HCT116 (cell line): ENCODE measurements at regions of chr14 and their contacts with region 1.

Region 1: GRCh38 chr14:105931808-105932483 is 405.6 kb downstream of the TMEM121 start:
- DNase-seq: no peak
- ATAC-seq: peak; percentile 71
- H3K4me3 ChIP-seq: no peak overlapping the region
- H3K27ac ChIP-seq: no peak overlapping the region
- H3K4me1 ChIP-seq: no peaks in the 10 kb centered on the region
- H3K27me3 ChIP-seq: 0 out of 2 replicates have a peak, but pooled peaks cover 16% of the 10 kb centered on the region
- CTCF ChIP-seq: peak; percentile 18 to 41 (median 24); a peak in 2 of 6 replicates
- POLR2A ChIP-seq: no peak
- RAD21 ChIP-seq: peak; percentile 59

Region 2: GRCh38 chr14:105168979-105169507 is 762.9 kb before region 1 on chr14:
- CTCF ChIA-PET with region 1: no interaction called
- POLR2A ChIA-PET with region 1: no interaction called
- RAD21 ChIA-PET with region 1: no interaction called
- intact Hi-C with region 1: no loop called
- DNase-seq: no peak
- ATAC-seq: peak; percentile 52
- H3K4me3 ChIP-seq: peak overlapping the region; percentile 19 to 48
- H3K27ac ChIP-seq: peak overlapping the region; percentile 50; the same call in 1 of the 2 replicates
- H3K4me1 ChIP-seq: peaks cover 45 to 62% of the 10 kb centered on the region in 2 experiments
- H3K27me3 ChIP-seq: no peaks in the 10 kb centered on the region
- CTCF ChIP-seq: peak in 2 of 3 experiments; percentile 58 to 60; a peak in 4 of 6 replicates
- POLR2A ChIP-seq: no peak
- RAD21 ChIP-seq: no peak

Region 3: DNA sequence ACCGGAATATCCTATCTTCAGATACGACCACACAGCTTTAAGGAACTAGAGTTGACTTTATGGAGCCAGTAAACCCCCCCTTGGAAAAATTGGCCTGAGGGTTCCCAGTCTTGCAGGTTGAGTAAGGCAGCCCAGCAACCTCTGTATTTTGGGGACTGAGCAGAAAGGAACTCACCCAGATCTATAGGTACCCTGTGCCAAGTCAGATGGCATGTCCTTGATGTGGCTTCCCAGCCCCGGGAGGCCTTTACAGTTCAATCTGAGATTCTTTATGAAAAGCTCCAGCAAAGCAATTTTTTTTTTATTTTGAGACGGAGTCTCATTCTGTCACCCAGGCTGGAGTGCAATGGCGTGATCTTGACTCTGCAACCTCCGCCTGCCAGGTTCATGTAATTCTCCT is 377.9 kb before region 1 on chr14:
- CTCF ChIA-PET with region 1: no interaction called
- POLR2A ChIA-PET with region 1: no interaction called
- RAD21 ChIA-PET with region 1: no interaction called
- intact Hi-C with region 1: loop called (anchors 10 kb)
- DNase-seq: no peak
- ATAC-seq: no peak
- H3K4me3 ChIP-seq: no peak overlapping the region
- H3K27ac ChIP-seq: no peak overlapping the region
- H3K4me1 ChIP-seq: no peaks in the 10 kb centered on the region
- H3K27me3 ChIP-seq: no peaks in the 10 kb centered on the region
- CTCF ChIP-seq: no peak
- POLR2A ChIP-seq: no peak
- RAD21 ChIP-seq: no peak

Region 4: DNA sequence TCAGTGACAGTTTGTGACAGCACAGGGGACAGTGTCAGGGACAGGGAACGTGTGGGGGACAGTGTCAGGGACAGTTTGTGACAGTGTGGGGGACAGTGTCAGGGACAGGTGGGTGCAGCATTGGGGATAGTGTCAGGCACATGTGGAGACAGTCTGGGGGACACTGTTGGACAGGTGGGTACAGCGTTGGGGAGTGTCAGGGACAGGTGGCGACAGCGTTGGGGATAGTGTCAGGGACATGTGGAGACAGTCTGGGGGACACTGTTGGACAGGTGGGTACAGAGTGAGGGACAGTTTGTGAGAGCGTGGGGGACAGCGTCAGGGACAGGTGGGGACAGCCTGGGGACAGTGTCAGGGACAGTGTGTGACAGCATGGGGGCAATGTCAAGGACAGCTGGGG is 265.5 kb before region 1 on chr14:
- CTCF ChIA-PET with region 1: no interaction called
- POLR2A ChIA-PET with region 1: no interaction called
- RAD21 ChIA-PET with region 1: no interaction called
- intact Hi-C with region 1: loop called (anchors 5 kb)
- DNase-seq: no peak
- ATAC-seq: no peak
- H3K4me3 ChIP-seq: no peak overlapping the region
- H3K27ac ChIP-seq: no peak overlapping the region
- H3K4me1 ChIP-seq: no peaks in the 10 kb centered on the region
- H3K27me3 ChIP-seq: no peaks in the 10 kb centered on the region
- CTCF ChIP-seq: no peak
- POLR2A ChIP-seq: no peak
- RAD21 ChIP-seq: no peak